Right lobe of liver (tissue), 6 donors: ENCODE measurements at regions of chr5 and their contacts with region 1.

Region 1: DNA sequence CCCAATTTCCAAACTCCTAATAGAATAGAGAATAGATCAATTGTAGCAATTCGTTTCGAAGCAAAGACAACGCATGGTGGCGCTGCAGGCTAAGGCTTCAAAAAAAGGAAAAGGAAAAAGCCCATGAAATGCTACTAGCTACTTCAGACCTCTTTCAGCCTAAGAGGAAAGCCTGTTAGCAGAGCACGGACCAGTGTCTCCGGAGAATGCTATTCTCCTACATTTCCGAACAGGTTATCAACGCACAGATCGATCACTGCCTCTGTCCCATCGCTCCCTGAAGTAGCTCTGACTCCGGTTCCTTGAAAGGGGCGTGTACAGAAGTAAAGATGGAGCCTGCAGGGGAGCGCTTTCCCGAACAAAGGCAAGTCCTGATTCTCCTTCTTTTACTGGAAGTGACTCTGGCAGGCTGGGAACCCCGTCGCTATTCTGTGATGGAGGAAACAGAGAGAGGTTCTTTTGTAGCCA is at the start of gene PCDHB15:
- DNase-seq: no peak
- ATAC-seq: no peak
- H3K4me3 ChIP-seq: no peak within 1 kb of the TSS
- H3K27ac ChIP-seq: no peak within 1 kb of the TSS
- H3K4me1 ChIP-seq: no peaks in the 10 kb centered on the region
- H3K27me3 ChIP-seq: no peaks in the 10 kb centered on the region
- CTCF ChIP-seq: no peak
- POLR2A ChIP-seq: no peak
- total RNA-seq, gene PCDHB15: 0.37 to 0.83 (median 0.63) TPM

Region 2: DNA sequence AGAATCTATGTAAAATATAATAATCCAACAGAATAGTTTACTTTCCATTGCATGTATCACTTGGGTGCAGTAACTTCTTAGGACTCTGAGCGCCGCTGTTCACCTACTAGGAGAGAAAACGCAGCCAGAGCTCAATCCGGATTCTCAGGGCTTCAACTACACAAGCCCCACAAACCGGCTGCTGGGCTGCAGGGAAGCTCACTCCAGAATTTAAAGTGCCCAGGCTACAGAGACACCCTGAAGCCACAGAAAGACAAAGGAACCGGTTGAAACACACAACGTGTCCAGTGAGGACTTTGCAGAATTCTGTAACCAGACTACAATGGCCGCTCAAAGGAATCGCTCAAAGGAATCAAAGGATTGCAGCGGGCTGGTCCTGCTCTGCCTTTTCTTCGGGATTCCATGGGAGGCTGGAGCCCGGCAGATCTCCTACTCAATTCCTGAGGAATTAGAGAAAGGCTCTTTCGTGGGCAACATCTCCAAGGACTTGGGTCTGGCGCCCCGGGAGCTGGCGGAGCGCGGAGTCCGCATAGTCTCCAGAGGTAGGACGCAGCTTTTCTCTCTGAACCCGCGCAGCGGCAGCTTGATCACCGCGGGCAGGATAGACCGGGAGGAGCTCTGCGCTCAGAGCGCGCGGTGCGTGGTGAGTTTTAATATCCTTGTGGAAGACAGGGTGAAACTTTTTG is 167.7 kb after region 1 on chr5 and contains the start of gene PCDHGA10:
- intact Hi-C with region 1: loop called in 1 of 2 experiments (anchors 10 kb)
- DNase-seq: peak in 2 of 3 donors; percentile 62 to 70
- ATAC-seq: peak; percentile 79 to 86 (median 85)
- H3K4me3 ChIP-seq: peak within 1 kb of the TSS; percentile 26 to 56 (median 45)
- H3K27ac ChIP-seq: peak within 1 kb of the TSS in 2 of 3 donors; percentile 4 to 30
- H3K4me1 ChIP-seq: no peaks in the 10 kb centered on the region
- H3K27me3 ChIP-seq: no peaks in the 10 kb centered on the region
- CTCF ChIP-seq: peak; percentile 46 to 62 (median 52)
- POLR2A ChIP-seq: no peak
- total RNA-seq, gene PCDHGA10: 1.5 to 4.6 (median 2.8) TPM

Region 3: GRCh38 chr5:141680751-141681201 is 435.5 kb after region 1 on chr5:
- intact Hi-C with region 1: no loop called
- DNase-seq: peak in 2 of 3 donors; percentile 68 to 70
- ATAC-seq: peak; percentile 42 to 70 (median 56)
- H3K4me3 ChIP-seq: peak overlapping the region in 1 of 3 donors; percentile 50
- H3K27ac ChIP-seq: peak overlapping the region in 2 of 3 donors; percentile 62 to 66
- H3K4me1 ChIP-seq: peaks cover 0 to 9% (median 2%) of the 10 kb centered on the region in 4 donors
- H3K27me3 ChIP-seq: no peaks in the 10 kb centered on the region
- CTCF ChIP-seq: no peak
- POLR2A ChIP-seq: peak; percentile 14